ENCODE measurements at regions of chr7 and their contacts with region 1.

Region 1: DNA sequence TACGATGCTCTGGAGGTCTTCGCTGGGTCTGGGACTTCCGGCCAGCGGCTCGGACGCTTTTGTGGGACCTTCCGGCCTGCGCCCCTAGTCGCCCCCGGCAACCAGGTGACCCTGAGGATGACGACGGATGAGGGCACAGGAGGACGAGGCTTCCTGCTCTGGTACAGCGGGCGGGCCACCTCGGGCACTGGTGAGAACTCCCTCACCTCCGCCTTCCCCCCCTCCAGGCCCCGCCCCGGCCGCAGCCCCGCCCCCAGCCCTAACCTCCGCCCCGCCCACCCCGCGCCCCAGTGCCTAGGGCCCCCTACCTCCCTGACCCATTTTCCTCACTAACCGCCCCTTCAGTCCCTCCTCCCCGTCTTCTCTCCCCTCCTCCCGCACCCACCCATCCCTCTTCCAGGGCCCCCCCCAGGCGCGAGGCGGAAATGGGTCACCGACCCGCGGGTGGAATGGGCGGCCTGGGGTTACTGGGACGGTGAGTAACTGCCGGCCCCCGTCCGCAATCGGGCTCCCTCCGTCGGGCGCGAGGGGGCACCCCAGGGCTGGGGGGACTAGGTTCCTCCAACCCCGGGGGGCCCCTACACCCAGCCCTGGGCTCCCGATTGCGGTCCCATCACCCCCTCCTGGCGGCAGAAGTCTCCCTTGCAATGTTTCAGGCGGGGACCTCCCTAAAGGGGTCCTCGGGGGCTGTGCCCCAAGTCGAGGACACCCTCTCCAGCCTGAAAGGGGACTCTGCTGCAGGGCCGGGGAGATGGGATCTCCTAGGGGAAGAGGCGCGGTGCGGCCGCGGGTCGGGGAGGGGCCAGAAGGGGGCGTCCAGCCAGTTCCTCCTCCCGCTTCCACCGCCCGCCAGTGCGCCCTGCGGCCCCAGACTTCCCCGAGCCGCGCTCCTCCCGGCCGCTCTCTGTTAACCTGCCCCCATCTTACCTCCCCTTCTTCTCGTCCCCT is 2.1 kb downstream of the PCOLCE start:
- DNase-seq: peak in 1 of 2 donors; percentile 89
- H3K4me3 ChIP-seq: peak overlapping the region; percentile 89 to 91
- H3K27ac ChIP-seq: peak overlapping the region; percentile 87 to 88
- H3K4me1 ChIP-seq: peaks cover 0 to 24% of the 10 kb centered on the region in 2 donors
- H3K27me3 ChIP-seq: no peaks in the 10 kb centered on the region
- CTCF ChIP-seq: peak; percentile 39 to 60 (median 47)

Region 2: DNA sequence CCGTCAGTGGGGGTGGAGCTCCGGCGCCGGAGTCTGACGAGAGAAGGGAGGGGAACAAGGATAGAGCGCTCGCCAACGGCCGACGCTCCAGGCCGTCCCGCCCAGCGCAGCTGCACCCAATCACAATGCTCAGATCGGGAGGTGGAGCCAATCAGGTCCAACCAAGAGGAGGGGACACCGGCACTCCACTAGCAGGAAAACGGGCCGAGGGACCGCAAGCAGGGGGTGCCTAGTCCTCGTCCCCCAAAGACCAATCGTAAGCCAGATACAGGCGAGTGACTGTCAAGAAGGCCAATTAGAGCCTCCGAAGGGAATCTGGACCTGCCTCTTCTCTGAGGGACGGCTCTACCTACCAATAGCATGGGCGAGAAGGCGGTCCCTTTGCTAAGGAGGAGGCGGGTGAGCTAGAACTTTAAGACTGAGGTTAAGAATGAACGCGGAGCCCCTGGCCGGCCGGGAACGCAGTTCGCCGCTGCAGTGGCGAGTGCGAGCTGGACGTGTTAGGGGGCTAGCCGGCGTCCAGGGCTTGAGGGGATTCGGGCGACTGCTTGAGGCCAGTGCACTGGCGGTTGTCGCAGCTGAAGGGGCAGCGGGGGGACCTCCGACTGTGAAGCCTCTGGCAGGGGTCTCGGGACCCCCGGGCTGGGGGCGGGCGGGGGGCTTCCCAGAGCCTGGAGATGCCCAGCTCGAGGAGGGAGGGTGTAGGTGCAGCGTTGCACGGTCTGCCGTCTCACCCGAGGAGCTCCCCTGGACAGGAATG is 17.9 kb before region 1 on chr7 and contains the start of gene FBXO24:
- intact Hi-C with region 1: loop called (anchors 1 kb)
- DNase-seq: peak; percentile 99 to 100
- H3K4me3 ChIP-seq: peak within 1 kb of the TSS; percentile 82 to 84
- H3K27ac ChIP-seq: peak within 1 kb of the TSS; percentile 84 to 87
- H3K4me1 ChIP-seq: peaks cover 0 to 25% of the 10 kb centered on the region in 2 donors
- H3K27me3 ChIP-seq: no peaks in the 10 kb centered on the region
- CTCF ChIP-seq: no peak
- total RNA-seq, gene FBXO24: not detected

Region 3: GRCh38 chr7:100867040-100867775 is 262.9 kb after region 1 on chr7 and contains the start of gene TRIP6:
- intact Hi-C with region 1: loop called (anchors 5 kb)
- DNase-seq: peak; percentile 71 to 96
- H3K4me3 ChIP-seq: peak within 1 kb of the TSS; percentile 94 to 95
- H3K27ac ChIP-seq: peak within 1 kb of the TSS; percentile 99
- H3K4me1 ChIP-seq: peaks cover 17 to 23% of the 10 kb centered on the region in 2 donors
- H3K27me3 ChIP-seq: no peaks in the 10 kb centered on the region
- CTCF ChIP-seq: no peak
- total RNA-seq, gene TRIP6: 221 TPM

Region 4: DNA sequence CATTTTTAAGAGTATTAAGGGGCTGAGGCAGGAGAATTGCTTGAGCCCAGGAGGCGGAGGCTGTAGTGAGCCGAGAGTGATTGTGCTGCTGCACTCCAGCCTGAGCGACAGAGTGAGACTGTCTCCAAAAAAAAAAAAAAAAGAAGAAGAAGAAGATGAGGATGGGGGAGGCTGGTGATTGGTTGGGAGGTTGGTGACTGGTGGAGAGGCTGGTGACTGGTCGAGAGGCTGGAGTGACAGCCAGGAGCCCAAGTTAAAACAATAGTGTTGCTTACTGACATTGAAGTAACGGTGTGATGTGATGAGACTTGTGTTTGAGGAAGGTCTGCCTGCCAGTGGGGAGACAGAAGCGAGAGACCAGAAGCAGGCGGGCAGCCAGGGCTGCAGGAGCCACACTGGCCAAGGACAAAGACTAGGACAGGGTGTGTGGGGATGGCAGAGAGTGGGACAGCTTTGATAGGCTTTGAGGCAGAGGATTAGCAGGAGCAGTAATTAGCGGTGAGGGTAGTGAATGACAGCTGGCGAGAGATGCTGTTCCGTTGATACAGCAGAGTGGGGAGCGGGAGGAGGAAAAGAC is 275.5 kb after region 1 on chr7:
- intact Hi-C with region 1: no loop called
- DNase-seq: no peak
- H3K4me3 ChIP-seq: no peak overlapping the region
- H3K27ac ChIP-seq: no peak overlapping the region
- H3K4me1 ChIP-seq: peaks cover 9 to 25% of the 10 kb centered on the region in 2 donors
- H3K27me3 ChIP-seq: no peaks in the 10 kb centered on the region
- CTCF ChIP-seq: no peak

Measured in ascending aorta (tissue), 2 donors.